K562 (cell line): ENCODE measurements at regions of chr9 and their contacts with region 1.

Region 1: GRCh38 chr9:125119643-125120286 is 23.6 kb downstream of the SCAI start:
- DNase-seq: peak in 2 of 4 experiments; percentile 17 to 44
- ATAC-seq: peak; percentile 83
- H3K4me3 ChIP-seq: no peak overlapping the region
- H3K27ac ChIP-seq: peak overlapping the region; percentile 21; the same call in 1 of the 3 replicates
- H3K4me1 ChIP-seq: peaks cover 3 to 9% of the 10 kb centered on the region in 2 experiments; a peak in 4 of 5 replicates
- H3K27me3 ChIP-seq: no peaks in the 10 kb centered on the region
- CTCF ChIP-seq: peak in 2 of 3 experiments; percentile 27 to 44; a peak in 3 of 6 replicates
- EP300 ChIP-seq: no peak
- POLR2A ChIP-seq: no peak
- RAD21 ChIP-seq: peak; percentile 8 to 43; a peak in 2 of 4 replicates

Region 2: DNA sequence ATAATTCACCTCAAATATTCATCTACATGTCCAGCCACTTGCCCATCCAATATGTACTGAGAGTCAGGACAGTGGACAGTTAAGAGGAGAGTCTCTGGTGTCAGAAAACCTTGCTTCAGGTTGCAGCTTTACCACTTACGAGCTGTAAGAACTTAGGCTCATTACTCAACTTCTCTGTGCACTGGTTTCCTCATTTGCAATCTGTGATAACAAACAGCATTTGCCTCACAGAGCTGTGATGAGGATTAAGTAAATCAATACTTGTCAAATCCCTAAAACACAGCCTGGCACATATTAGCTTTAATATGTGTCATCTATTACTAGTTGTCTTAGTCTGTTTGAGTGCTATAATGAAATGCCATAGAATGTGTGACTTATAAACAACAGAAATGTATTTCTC is 187.4 kb before region 1 on chr9:
- CTCF ChIA-PET with region 1: no interaction called
- POLR2A ChIA-PET with region 1: no interaction called
- in situ Hi-C with region 1: no loop called
- intact Hi-C with region 1: no loop called
- DNase-seq: no peak
- ATAC-seq: no peak
- H3K4me3 ChIP-seq: no peak overlapping the region
- H3K27ac ChIP-seq: no peak overlapping the region
- H3K4me1 ChIP-seq: no peaks in the 10 kb centered on the region
- H3K27me3 ChIP-seq: no peaks in the 10 kb centered on the region
- CTCF ChIP-seq: no peak
- EP300 ChIP-seq: no peak
- POLR2A ChIP-seq: no peak
- RAD21 ChIP-seq: no peak

Region 3: DNA sequence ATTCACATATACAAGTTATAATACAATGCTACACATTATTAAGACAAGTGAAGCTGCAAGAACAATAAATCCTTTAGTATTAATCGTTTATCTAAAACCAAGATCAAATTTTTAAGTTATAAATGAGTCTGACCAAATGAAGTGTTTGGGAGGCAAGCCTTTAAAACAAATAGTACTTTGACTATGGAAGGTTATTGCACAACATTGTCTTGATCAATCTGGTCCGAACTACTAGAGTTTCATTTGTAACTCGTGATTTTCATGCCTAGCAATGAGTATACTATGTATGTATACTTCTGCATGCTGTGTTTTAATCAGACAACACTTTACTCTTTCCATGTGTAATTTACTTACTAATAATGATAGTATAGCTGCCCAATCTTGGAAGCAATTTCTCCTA is 91.7 kb before region 1 on chr9:
- CTCF ChIA-PET with region 1: no interaction called
- POLR2A ChIA-PET with region 1: no interaction called
- in situ Hi-C with region 1: no loop called
- intact Hi-C with region 1: no loop called
- DNase-seq: no peak
- ATAC-seq: no peak
- H3K4me3 ChIP-seq: no peak overlapping the region
- H3K27ac ChIP-seq: no peak overlapping the region
- H3K4me1 ChIP-seq: no peaks in the 10 kb centered on the region
- H3K27me3 ChIP-seq: no peaks in the 10 kb centered on the region
- CTCF ChIP-seq: no peak
- EP300 ChIP-seq: no peak
- POLR2A ChIP-seq: no peak
- RAD21 ChIP-seq: no peak

Region 4: GRCh38 chr9:125049212-125050049 is 70.3 kb before region 1 on chr9:
- CTCF ChIA-PET with region 1: no interaction called
- POLR2A ChIA-PET with region 1: no interaction called
- in situ Hi-C with region 1: no loop called
- intact Hi-C with region 1: loop called (anchors 10 kb)
- DNase-seq: no peak
- ATAC-seq: no peak
- H3K4me3 ChIP-seq: no peak overlapping the region
- H3K27ac ChIP-seq: no peak overlapping the region
- H3K4me1 ChIP-seq: no peaks in the 10 kb centered on the region
- H3K27me3 ChIP-seq: no peaks in the 10 kb centered on the region
- CTCF ChIP-seq: no peak
- EP300 ChIP-seq: no peak
- POLR2A ChIP-seq: no peak
- RAD21 ChIP-seq: no peak